ENCODE measurements at regions of chr5 and their contacts with region 1.

Region 1: DNA sequence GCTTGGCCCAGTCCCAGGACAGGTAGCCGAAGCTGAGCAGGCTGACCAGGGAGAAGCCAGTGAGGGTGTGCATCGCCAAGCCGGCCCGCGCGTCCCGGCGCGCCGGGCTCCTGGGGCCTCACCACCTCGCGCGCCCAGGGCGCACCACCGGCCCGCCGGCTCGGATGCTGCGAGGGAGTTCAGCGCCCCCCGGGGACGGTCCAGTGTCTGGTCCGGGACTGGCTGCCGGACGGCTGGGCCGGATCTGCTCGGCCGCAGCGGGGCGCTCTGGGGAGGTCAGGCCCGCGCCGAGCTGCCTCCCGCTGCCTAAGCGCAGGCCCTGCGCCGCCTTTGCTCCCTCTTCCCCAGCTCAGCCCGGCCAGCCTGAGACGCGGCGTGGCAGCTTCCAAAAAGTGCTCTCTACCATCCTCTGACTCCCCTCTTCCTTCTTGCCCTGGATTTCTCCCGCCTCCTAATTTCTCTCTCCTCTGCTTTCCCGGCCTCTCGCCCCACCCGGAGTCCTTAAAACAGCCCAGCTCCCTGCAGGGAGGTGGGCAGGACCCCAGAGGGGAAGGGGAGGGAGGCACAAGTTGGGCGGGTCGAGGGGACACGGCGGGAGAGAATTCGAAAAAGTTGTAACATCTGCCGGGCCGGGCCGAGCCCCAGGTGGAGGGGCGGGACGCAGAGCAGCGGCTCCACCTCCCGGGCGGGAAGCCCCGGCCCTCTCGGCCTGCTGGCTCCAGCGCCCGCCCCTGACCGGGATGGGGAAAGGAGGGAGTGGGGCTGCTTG is at the start of gene ARSI:
- DNase-seq: peak in 1 of 2 experiments; percentile 86
- H3K4me3 ChIP-seq: peak within 1 kb of the TSS; percentile 41 to 67 (median 55)
- H3K27ac ChIP-seq: no peak within 1 kb of the TSS
- H3K4me1 ChIP-seq: peaks cover 9 to 23% (median 14%) of the 10 kb centered on the region in 4 experiments
- H3K27me3 ChIP-seq: peaks cover 0 to 12% (median 7%) of the 10 kb centered on the region in 4 experiments; a peak in 5 of 7 replicates
- CTCF ChIP-seq: peak in 2 of 3 experiments; percentile 33 to 50; a peak in 3 of 4 replicates
- EP300 ChIP-seq: no peak
- POLR2A ChIP-seq: no peak
- RAD21 ChIP-seq: peak in 1 of 2 experiments; percentile 8; a peak in 1 of 4 replicates
- total RNA-seq, gene ARSI: 4.5 TPM in 2 replicates

Region 2: GRCh38 chr5:150320048-150320555 is 17.6 kb after region 1 on chr5:
- CTCF ChIA-PET with region 1: interaction called, 15 read pairs
- POLR2A ChIA-PET with region 1: interaction called, 11 read pairs
- DNase-seq: no peak
- H3K4me3 ChIP-seq: no peak overlapping the region
- H3K27ac ChIP-seq: no peak overlapping the region
- H3K4me1 ChIP-seq: peaks cover 0 to 6% (median 1%) of the 10 kb centered on the region in 4 experiments; a peak in 4 of 7 replicates
- H3K27me3 ChIP-seq: no peaks in the 10 kb centered on the region
- CTCF ChIP-seq: no peak
- EP300 ChIP-seq: no peak
- POLR2A ChIP-seq: no peak
- RAD21 ChIP-seq: no peak